ENCODE measurements at regions of chr11 and their contacts with region 1.

Region 1: GRCh38 chr11:64778508-64779346 is at the start of gene SF1:
- DNase-seq: peak; percentile 91
- ATAC-seq: peak; percentile 81
- H3K4me3 Mint-ChIP-seq: peak within 1 kb of the TSS; percentile 90
- H3K27ac Mint-ChIP-seq: peak within 1 kb of the TSS; percentile 99
- H3K4me1 Mint-ChIP-seq: peaks cover 75% of the 10 kb centered on the region
- H3K27me3 Mint-ChIP-seq: no peaks in the 10 kb centered on the region
- CTCF ChIP-seq: no peak
- total RNA-seq, gene SF1: 640 and 687 TPM in 2 replicates

Region 2: GRCh38 chr11:64688534-64688982 is 90.2 kb before region 1 on chr11:
- CTCF ChIA-PET with region 1: interaction called, 7 read pairs
- POLR2A ChIA-PET with region 1: interaction called, 7 read pairs
- intact Hi-C with region 1: loop called (anchors 2 kb)
- DNase-seq: peak; percentile 91
- ATAC-seq: peak; percentile 95
- H3K4me3 Mint-ChIP-seq: peak overlapping the region; percentile 82
- H3K27ac Mint-ChIP-seq: peak overlapping the region; percentile 82
- H3K4me1 Mint-ChIP-seq: peaks cover 21% of the 10 kb centered on the region
- H3K27me3 Mint-ChIP-seq: peaks cover 15% of the 10 kb centered on the region
- CTCF ChIP-seq: peak; percentile 85

Region 3: DNA sequence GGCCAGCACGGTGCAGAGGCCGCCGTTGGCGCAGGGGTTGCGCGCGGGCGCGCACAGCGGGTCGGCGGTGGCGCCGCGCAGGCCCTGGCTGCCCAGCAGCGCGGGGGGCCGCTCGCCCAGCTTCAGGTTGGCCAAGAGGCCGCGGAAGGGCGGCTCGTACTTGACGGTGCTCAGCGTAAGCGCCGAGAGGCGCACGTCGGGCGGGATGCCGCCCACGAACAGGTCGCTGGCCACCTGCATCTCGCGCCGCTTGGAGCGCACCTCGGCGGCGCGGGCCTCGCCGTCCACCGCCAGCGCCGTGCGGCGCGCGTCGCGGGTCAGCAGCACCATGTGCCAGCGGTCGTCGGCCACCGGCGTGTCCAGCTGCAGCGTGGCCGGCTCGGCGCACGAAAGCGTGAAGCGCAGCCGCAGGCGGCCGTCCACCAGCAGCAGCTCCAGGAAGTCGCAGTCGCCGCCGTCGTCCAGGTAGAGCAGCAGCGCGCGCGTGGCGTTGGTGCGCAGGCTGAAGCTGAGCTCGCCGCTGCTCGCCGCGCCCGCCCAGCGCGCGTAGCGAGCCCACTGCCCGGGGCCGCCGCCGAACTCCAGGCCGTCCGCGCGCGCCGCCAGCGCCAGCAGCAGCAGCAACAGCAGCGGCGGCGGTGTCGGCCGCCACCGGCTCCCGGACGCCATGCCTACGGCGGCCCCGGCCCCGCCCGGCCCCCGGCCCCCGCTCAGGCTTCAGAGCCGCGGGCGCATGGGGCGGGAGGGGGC is 65.5 kb before region 1 on chr11:
- CTCF ChIA-PET with region 1: no interaction called
- POLR2A ChIA-PET with region 1: no interaction called
- intact Hi-C with region 1: no loop called
- DNase-seq: no peak
- ATAC-seq: peak; percentile 32
- H3K4me3 Mint-ChIP-seq: no peak overlapping the region
- H3K27ac Mint-ChIP-seq: no peak overlapping the region
- H3K4me1 Mint-ChIP-seq: peaks cover 25% of the 10 kb centered on the region
- H3K27me3 Mint-ChIP-seq: peaks cover 72% of the 10 kb centered on the region
- CTCF ChIP-seq: no peak

Region 4: DNA sequence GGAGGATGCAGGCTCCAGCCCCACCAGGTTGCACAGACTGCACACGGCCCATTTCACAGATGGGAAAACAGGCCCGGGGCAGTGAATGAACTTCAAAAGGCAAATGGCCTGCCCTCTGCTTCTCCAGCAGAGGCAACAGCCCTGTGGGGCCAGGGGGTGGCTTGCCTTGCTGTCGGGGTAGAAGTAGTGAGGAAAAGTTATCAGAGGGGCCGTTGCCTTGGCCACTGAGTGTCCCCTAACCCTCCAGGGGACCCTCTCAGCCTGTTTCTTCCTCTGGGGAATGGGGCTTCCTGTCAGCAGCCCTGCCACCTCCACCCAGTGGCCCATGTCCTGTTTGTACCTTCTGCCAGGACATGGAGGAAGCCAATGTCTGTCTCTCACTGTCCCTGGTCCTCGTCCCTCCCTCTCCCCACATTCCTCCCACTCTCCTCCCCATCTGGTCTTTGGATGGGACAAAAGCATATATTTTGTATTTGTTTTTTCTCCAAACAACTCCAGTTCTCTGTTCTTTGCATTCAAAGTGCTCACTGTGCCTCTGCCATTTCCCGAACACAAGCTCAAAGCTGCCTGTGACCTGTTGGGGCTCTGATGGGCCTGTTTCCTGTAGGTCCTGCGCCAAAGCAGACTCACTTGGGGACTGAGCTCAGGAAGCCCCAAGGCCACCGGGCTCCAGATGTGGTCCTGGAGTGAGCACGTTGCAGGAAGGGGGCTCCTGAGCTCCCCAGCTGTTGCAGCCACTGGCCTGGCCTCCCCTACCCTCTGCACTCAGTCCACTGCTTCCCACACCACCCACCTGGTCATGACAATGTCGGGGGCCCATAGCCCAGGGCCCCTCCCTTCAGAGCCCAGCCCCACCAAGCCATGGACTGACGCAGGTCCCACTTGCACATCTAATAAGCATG is 14.8 kb after region 1 on chr11:
- CTCF ChIA-PET with region 1: interaction called, 3 read pairs
- POLR2A ChIA-PET with region 1: interaction called, 86 read pairs
- intact Hi-C with region 1: no loop called
- DNase-seq: no peak
- ATAC-seq: no peak
- H3K4me3 Mint-ChIP-seq: no peak overlapping the region
- H3K27ac Mint-ChIP-seq: peak overlapping the region; percentile 69
- H3K4me1 Mint-ChIP-seq: peaks cover 23% of the 10 kb centered on the region
- H3K27me3 Mint-ChIP-seq: no peaks in the 10 kb centered on the region
- CTCF ChIP-seq: no peak

Region 5: GRCh38 chr11:64853709-64854108 is 75.0 kb after region 1 on chr11:
- CTCF ChIA-PET with region 1: interaction called, 8 read pairs
- POLR2A ChIA-PET with region 1: interaction called, 20 read pairs
- intact Hi-C with region 1: loop called (anchors 2 kb)
- DNase-seq: peak; percentile 30
- ATAC-seq: no peak
- H3K4me3 Mint-ChIP-seq: peak overlapping the region; percentile 75
- H3K27ac Mint-ChIP-seq: peak overlapping the region; percentile 95
- H3K4me1 Mint-ChIP-seq: peaks cover 94% of the 10 kb centered on the region
- H3K27me3 Mint-ChIP-seq: no peaks in the 10 kb centered on the region
- CTCF ChIP-seq: no peak

Region 6: GRCh38 chr11:64916775-64917662 is 138.3 kb after region 1 on chr11 and contains the start of gene ATG2A:
- CTCF ChIA-PET with region 1: no interaction called
- POLR2A ChIA-PET with region 1: no interaction called
- intact Hi-C with region 1: loop called (anchors 1 kb)
- DNase-seq: peak; percentile 97
- ATAC-seq: peak; percentile 98
- H3K4me3 Mint-ChIP-seq: peak within 1 kb of the TSS; percentile 88
- H3K27ac Mint-ChIP-seq: peak within 1 kb of the TSS; percentile 85
- H3K4me1 Mint-ChIP-seq: peaks cover 38% of the 10 kb centered on the region
- H3K27me3 Mint-ChIP-seq: no peaks in the 10 kb centered on the region
- CTCF ChIP-seq: no peak
- total RNA-seq, gene ATG2A: 31.2 and 35.0 TPM in 2 replicates

Region 7: GRCh38 chr11:64971421-64972233 is 192.9 kb after region 1 on chr11 and contains the start of gene MAJIN:
- CTCF ChIA-PET with region 1: no interaction called
- POLR2A ChIA-PET with region 1: no interaction called
- intact Hi-C with region 1: no loop called
- DNase-seq: peak; percentile 83
- ATAC-seq: peak; percentile 77
- H3K4me3 Mint-ChIP-seq: peak within 1 kb of the TSS; percentile 80
- H3K27ac Mint-ChIP-seq: peak within 1 kb of the TSS; percentile 84
- H3K4me1 Mint-ChIP-seq: peaks cover 34% of the 10 kb centered on the region
- H3K27me3 Mint-ChIP-seq: no peaks in the 10 kb centered on the region
- CTCF ChIP-seq: no peak
- total RNA-seq, gene MAJIN: 0.20 and 1.5 TPM in 2 replicates